Heart right ventricle (tissue), 16 donors: ENCODE measurements at regions of chr1 and their contacts with region 1.

Region 1: GRCh38 chr1:56644919-56645676 is at the start of gene PRKAA2:
- DNase-seq: peak; percentile 23 to 63
- ATAC-seq: peak; percentile 67 to 94 (median 83)
- H3K4me3 ChIP-seq: peak within 1 kb of the TSS; percentile 11 to 80 (median 62)
- H3K27ac ChIP-seq: peak within 1 kb of the TSS; percentile 76 to 91 (median 88)
- H3K4me1 ChIP-seq: peaks cover 0 to 13% (median 9%) of the 10 kb centered on the region in 9 donors
- H3K27me3 ChIP-seq: peaks cover 0 to 60% (median 0%) of the 10 kb centered on the region in 7 donors
- CTCF ChIP-seq: peak in 1 of 9 donors; percentile 4
- total RNA-seq, gene PRKAA2: 71.8 to 166 (median 143) TPM

Region 2: GRCh38 chr1:56627636-56628039 is 17.5 kb before region 1 on chr1:
- intact Hi-C with region 1: no loop called
- DNase-seq: no peak
- ATAC-seq: no peak
- H3K4me3 ChIP-seq: no peak overlapping the region
- H3K27ac ChIP-seq: no peak overlapping the region
- H3K4me1 ChIP-seq: no peaks in the 10 kb centered on the region
- H3K27me3 ChIP-seq: peaks cover 0 to 9% (median 0%) of the 10 kb centered on the region in 7 donors
- CTCF ChIP-seq: no peak

Region 3: DNA sequence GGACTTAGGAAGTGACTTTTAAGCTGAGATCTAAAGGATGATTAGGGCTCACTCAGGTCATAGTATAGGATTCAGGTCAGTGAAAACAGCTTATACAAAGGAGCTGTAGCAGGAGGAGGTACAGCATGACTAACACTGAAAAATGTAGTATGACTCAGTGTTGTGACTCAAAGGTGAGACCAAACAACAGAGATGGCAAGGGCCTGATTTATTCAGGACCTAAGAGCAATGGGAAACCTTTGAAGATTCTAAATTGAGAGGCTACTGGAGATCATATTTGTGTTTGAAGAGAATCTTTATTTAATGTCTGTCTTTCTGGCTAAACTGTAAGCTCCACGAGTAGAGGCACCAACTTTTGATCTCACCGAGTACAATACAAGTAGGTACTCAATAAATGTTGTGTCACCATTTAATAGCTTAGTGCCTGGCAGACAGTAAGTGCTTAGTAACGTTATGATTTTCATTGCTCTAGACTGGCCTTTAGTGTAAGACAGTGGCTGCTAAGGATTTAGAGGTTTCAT is 43.5 kb after region 1 on chr1:
- intact Hi-C with region 1: loop called in 1 of 10 experiments (anchors 5 kb)
- DNase-seq: no peak
- ATAC-seq: peak in 3 of 8 donors; percentile 48 to 81 (median 70)
- H3K4me3 ChIP-seq: no peak overlapping the region
- H3K27ac ChIP-seq: peak overlapping the region in 1 of 10 donors; percentile 18
- H3K4me1 ChIP-seq: peaks cover 0 to 22% (median 8%) of the 10 kb centered on the region in 9 donors
- H3K27me3 ChIP-seq: no peaks in the 10 kb centered on the region
- CTCF ChIP-seq: no peak

Region 4: DNA sequence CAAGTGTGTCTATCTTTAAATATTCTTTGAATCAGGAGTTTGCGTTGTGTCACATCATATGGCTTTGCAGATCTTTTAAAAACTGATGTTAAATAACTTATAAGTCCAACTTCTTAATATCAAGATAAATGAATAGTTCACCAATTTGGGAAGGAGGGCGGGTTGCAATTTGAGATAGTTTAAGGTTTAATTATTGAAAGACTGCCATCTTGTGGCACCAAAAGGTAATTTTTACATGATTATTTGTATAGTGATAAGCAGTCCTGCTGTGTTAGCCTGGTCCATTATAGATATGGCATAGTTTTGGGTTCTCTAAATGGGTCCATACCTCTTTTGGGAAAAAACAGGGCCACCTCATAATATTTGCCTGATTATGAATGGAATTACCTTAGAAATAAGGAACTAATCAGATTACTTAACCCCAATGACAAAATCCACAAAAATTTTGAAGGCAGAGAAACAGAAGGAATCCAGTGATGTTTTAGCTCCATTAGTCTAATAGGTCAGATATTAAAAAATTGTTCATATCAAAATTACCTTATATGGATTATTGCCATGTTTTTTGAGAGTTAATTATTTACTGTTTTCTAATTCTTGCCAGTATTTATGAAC is 64.3 kb after region 1 on chr1:
- intact Hi-C with region 1: loop called in 1 of 10 experiments (anchors 5 kb)
- DNase-seq: no peak
- ATAC-seq: peak; percentile 38 to 78 (median 58)
- H3K4me3 ChIP-seq: no peak overlapping the region
- H3K27ac ChIP-seq: peak overlapping the region in 1 of 10 donors; percentile 2
- H3K4me1 ChIP-seq: peaks cover 0 to 36% (median 4%) of the 10 kb centered on the region in 9 donors
- H3K27me3 ChIP-seq: no peaks in the 10 kb centered on the region
- CTCF ChIP-seq: peak; percentile 28 to 73 (median 60)

Region 5: GRCh38 chr1:56803561-56804156 is 158.6 kb after region 1 on chr1:
- intact Hi-C with region 1: loop called in 1 of 10 experiments (anchors 10 kb)
- DNase-seq: no peak
- ATAC-seq: no peak
- H3K4me3 ChIP-seq: no peak overlapping the region
- H3K27ac ChIP-seq: peak overlapping the region in 1 of 10 donors; percentile 14
- H3K4me1 ChIP-seq: peaks cover 0 to 37% (median 4%) of the 10 kb centered on the region in 9 donors
- H3K27me3 ChIP-seq: no peaks in the 10 kb centered on the region
- CTCF ChIP-seq: peak in 7 of 9 donors; percentile 19 to 49 (median 38)